ENCODE measurements at regions of chr1 and their contacts with region 1.

Region 1: GRCh38 chr1:240337781-240338180 is 246.1 kb downstream of the FMN2 start:
- DNase-seq: no peak
- ATAC-seq: no peak
- H3K4me3 ChIP-seq: no peak overlapping the region
- H3K27ac ChIP-seq: no peak overlapping the region
- H3K4me1 ChIP-seq: peaks cover 12% of the 10 kb centered on the region
- CTCF ChIP-seq: no peak
- EP300 ChIP-seq: no peak
- POLR2A ChIP-seq: no peak
- RAD21 ChIP-seq: no peak

Region 2: GRCh38 chr1:240285541-240285940 is 52.2 kb before region 1 on chr1:
- CTCF ChIA-PET with region 1: no interaction called
- POLR2A ChIA-PET with region 1: interaction called, 10 read pairs
- DNase-seq: no peak
- ATAC-seq: no peak
- H3K4me3 ChIP-seq: no peak overlapping the region
- H3K27ac ChIP-seq: 0 out of 6 replicates have a peak overlapping the region, but pooled peaks of 1 of the 2 experiments have one; percentile 10
- H3K4me1 ChIP-seq: peaks cover 9% of the 10 kb centered on the region
- CTCF ChIP-seq: no peak
- EP300 ChIP-seq: no peak
- POLR2A ChIP-seq: no peak
- RAD21 ChIP-seq: no peak

Region 3: DNA sequence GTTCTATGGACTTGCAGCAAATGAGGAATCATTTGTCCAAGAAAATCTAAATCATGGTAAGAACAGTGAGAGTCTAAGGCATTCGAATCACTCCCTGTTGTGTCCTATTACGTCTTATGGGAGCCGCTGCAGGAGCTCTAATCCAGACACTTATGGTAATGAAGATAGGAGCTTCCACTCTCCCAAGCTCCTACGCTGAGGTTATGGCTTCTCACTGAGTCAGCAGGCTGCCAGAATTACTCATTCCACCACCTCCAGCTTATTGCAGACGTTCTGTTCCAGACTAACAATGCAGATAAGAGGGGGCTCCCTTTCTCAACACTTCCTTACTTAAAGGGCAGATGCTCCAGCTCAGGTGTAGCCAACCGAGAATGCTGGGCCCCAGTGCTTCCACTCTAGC is 61.6 kb after region 1 on chr1:
- CTCF ChIA-PET with region 1: no interaction called
- POLR2A ChIA-PET with region 1: no interaction called
- DNase-seq: peak in 1 of 2 experiments; percentile 26
- ATAC-seq: peak; percentile 89 to 94
- H3K4me3 ChIP-seq: no peak overlapping the region
- H3K27ac ChIP-seq: peak overlapping the region; percentile 53 to 78; a peak in 5 of 6 replicates
- H3K4me1 ChIP-seq: peaks cover 19% of the 10 kb centered on the region
- CTCF ChIP-seq: no peak
- EP300 ChIP-seq: no peak
- POLR2A ChIP-seq: no peak
- RAD21 ChIP-seq: no peak